Activated CD8-positive, alpha-beta T cell treated with anti-CD3 and anti-CD28 coated beads for 36 hours (primary cell): ENCODE measurements at regions of chrX and their contacts with region 1.

Region 1: DNA sequence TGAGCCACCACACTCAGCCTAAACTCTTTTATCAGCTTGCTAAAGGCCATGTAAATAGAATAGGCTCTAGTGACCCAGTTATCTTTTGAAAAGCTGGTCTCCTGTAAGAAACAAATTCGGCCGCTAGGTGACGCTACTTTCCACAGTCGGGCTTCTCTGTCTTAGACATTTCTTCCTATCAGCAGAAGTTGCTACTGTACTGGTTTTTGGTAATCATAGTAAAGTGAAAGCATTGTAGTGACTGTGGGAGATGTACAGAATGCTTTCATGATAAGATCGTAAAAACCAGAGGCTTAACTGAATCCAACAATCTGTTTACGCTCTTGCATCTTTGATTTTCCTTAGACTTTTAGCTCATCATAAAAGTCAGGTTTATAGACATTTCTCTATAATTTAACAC is 82.6 kb downstream of the GK start:
- DNase-seq: peak; percentile 88
- ATAC-seq: peak; percentile 87
- H3K4me3 Mint-ChIP-seq: no peak overlapping the region
- H3K27ac Mint-ChIP-seq: no peak overlapping the region
- H3K4me1 Mint-ChIP-seq: peaks cover 13% of the 10 kb centered on the region
- H3K27me3 Mint-ChIP-seq: no peaks in the 10 kb centered on the region
- CTCF ChIP-seq: peak; percentile 58

Region 2: DNA sequence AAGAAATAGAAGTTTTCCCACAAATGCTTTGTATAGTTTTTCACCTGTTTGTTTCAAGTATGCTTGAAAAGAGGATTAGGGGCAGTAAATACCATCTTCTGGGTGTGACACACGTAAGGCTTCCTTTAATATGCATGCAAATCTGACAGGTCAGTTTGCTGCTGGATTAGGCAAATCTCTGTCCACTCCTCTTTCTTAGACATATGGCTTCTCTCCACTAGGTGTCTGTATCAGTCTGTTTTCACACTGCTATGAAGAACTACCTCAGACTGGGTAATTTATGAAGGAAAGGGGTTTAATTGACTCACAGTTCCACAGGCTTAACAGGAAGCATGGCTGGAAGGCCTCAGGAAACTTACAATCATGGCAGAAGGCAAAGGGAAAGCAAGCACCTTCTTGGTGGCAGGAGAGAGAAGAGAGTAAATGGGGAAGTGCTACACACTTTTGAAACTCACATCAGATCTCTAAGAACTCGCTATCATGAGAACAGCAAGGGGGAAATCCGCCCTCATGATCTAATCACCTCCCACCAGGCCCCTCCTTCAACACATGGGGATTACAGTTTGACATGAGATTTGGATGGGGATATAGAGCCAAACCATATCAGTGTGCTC is 86.3 kb after region 1 on chrX:
- CTCF ChIA-PET with region 1: interaction called, 11 read pairs
- POLR2A ChIA-PET with region 1: no interaction called
- intact Hi-C with region 1: loop called (anchors 10 kb)
- DNase-seq: peak; percentile 4
- ATAC-seq: peak; percentile 20
- H3K4me3 Mint-ChIP-seq: no peak overlapping the region
- H3K27ac Mint-ChIP-seq: no peak overlapping the region
- H3K4me1 Mint-ChIP-seq: peaks cover 14% of the 10 kb centered on the region
- H3K27me3 Mint-ChIP-seq: no peaks in the 10 kb centered on the region
- CTCF ChIP-seq: no peak

Region 3: DNA sequence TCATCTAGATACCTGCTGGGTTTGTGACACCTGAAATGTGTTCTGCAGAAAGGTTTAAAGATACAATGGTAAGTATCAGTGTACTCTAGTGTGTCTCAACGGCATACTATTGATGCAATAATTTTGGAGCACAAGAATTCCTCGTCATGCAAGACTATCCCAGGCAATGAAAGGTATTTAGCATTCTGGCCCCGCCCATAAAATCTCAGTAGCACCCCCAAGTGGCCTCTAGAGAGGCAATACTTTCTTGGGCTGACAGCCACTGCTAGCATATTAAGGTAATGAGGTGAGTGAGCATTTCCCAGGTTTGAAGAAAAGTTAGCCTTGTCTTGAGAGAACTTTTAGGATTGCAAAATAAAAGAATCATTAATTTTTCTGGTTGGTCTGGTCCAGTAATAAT is 129.2 kb after region 1 on chrX:
- CTCF ChIA-PET with region 1: interaction called, 11 read pairs
- POLR2A ChIA-PET with region 1: no interaction called
- intact Hi-C with region 1: no loop called
- DNase-seq: peak; percentile 30
- ATAC-seq: no peak
- H3K4me3 Mint-ChIP-seq: no peak overlapping the region
- H3K27ac Mint-ChIP-seq: no peak overlapping the region
- H3K4me1 Mint-ChIP-seq: peaks cover 2% of the 10 kb centered on the region
- H3K27me3 Mint-ChIP-seq: no peaks in the 10 kb centered on the region
- CTCF ChIP-seq: peak; percentile 12

Region 4: DNA sequence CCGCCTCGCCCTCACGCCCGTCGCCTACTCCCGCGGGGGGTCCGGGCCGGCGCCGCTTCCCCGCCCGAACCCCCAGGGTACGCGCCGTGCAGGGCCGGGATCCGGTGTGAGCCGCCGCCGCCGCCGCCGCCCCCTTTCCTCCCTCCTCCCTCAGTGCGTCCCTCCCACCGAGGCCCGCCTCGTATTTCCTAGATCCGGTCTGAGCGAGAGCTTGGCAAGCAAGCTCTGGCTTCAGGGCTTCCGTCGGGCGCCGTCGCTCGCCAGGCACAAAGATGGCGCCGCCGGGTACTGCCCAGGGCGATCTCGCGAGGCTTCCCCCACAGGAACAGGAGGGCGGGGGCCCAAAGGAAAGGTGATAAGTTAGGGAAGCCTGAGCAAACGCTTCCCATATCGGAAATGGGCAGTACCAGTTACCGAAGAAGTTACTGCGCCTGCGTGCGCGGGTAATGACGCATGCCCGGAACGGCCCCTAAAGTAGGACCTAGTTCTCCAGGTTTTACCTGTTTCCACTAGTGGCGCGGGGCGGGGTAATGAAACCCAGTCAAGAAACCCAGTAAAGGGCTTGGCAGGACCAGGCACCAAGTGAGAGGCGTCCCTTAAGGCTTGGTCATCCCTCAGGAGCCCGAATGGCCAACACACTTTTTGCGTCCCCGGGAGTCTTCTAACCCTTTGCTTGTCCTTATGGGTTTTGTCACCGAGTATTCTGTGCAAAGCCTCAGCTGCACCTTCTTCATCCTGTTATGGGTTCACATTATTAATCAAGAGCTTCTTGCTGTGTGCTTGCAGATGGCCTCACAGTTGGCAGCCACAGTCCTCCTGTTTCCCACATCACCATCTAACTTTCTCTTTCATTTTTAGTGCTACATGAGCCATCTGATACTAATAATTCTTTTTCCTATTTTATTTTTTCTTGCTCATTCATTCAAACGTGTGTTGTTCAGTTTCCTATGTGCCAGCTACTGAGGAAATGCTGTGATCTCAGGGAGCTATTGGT is 153.6 kb after region 1 on chrX and contains the start of gene TAB3:
- CTCF ChIA-PET with region 1: interaction called, 7 read pairs
- POLR2A ChIA-PET with region 1: no interaction called
- intact Hi-C with region 1: loop called (anchors 10 kb)
- DNase-seq: peak; percentile 95
- ATAC-seq: peak; percentile 91
- H3K4me3 Mint-ChIP-seq: peak within 1 kb of the TSS; percentile 82
- H3K27ac Mint-ChIP-seq: peak within 1 kb of the TSS; percentile 95
- H3K4me1 Mint-ChIP-seq: peaks cover 32% of the 10 kb centered on the region
- H3K27me3 Mint-ChIP-seq: no peaks in the 10 kb centered on the region
- CTCF ChIP-seq: no peak
- total RNA-seq, gene TAB3: 15.5 to 16.5 TPM